Posterior vena cava (tissue), 2 donors: ENCODE measurements at regions of chr14 and their contacts with region 1.

Region 1: DNA sequence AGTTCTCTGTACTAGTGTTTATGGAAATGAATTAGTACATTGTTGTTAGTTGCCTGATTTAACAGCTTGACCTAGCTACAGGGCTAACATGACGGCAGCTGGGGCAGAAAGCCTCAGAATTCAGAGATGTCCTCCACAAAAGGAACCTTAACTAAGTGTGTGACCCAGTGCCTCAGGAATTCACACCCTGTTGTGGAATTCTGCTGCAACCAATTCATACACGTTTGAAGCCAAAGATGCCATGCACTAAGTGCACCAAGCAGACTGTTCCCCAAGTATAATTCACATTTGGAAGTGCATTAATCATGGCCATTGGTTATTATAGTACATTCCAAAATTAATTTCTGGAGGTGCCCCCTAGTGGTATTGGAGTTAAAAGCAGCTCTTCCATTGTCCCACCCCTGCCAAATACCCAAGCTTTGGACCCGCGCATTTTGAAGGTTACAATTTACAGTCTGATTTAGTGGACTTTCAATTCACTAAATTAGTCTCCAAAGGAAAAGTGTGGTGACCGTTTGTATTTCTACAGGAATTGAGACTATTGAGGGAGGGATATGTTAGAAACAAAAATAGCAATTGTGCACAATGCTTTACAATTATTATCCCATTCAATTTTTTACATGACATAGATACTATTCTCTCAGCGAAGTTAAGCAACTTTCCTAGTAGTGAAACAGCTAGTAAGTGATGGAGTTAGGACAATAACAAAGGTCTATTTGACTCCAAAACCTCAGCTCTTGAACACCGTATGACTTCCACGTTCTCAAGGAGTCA is 85.9 kb downstream of the PAX9 start:
- DNase-seq: no peak

Region 2: DNA sequence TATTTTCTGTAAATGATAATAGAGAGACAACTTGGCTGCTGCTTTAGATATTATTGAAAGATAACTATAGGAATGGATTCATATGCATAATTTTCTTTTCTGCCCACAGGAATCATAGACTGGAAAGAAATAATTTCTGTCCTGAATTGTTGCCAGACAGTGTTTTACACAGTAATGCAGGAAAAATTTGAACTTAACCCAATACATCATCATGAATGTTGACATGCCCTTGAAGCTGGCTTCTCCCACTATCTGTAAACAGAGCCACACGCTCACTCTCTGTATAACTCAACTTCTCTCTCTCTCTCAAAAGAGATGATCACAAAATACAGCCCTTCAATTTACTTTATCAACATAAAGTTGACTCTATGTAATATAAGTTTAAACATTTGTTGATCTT is 29.4 kb before region 1 on chr14:
- intact Hi-C with region 1: no loop called
- DNase-seq: no peak

Region 3: DNA sequence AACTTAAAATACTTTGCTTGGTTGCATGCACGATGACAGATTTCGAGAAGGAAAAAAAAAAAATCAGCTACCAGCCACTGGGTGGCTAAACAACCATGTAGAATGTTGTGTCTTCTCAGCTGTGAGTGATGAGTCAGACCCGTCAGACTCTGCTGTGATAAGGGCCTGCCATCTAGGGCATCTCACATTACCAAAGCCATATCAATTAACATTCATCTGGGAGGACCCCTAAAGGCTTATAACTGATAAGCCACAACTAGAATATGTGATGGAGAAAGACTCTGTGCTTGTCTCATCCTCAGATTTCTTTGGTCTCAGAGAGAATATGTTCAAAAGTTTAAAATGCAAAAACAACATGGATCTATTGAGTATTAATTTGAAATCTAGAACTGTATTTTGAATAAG is 25.5 kb after region 1 on chr14:
- intact Hi-C with region 1: loop called in 1 of 2 experiments (anchors 2 kb)
- DNase-seq: no peak

Region 4: DNA sequence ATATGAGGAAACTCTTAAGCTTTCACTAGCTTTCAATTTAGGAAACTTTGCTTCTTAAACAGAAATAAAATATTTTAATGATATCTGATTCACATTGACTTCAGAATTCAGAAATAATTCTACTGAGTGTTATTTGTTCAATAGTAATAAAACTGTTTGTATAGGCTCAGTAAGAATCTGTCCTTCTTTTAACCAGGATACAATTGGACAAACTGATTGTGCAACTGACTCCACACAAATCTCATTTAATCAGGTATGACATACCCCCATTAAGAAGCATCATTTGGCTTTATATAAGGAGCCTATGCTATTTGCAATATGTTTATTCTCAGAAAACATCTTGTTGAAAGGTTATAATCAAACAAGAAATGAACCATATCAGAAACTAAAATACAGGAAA is 1168.7 kb after region 1 on chr14:
- intact Hi-C with region 1: loop called in 1 of 2 experiments (anchors 10 kb)
- DNase-seq: no peak